Gastrocnemius medialis (tissue), 4 donors: ENCODE measurements at regions of chr9 and their contacts with region 1.

Region 1: DNA sequence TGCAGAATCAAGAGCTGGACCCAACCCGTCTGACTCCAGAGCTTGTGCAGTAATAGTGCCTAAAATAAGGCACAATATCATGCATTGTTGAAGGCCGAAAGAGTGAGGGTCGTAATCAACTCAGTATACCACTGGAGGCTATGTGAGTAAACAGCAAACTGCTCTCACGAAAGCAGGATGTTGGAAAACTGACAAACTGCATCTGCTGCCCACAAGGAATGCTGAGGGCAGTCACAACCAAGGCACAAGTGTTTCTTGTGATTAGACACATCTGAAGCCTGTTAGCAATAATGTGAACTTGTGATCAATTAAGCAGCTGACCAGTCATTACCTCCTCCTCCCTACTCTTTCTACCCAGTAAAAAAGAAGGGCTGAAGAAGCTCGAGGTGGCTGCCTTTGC is 48.8 kb downstream of the TRPM3 start:
- DNase-seq: no peak
- ATAC-seq: no peak
- H3K4me3 ChIP-seq: no peak overlapping the region
- H3K27ac ChIP-seq: no peak overlapping the region
- H3K4me1 ChIP-seq: no peaks in the 10 kb centered on the region
- H3K27me3 ChIP-seq: no peaks in the 10 kb centered on the region
- CTCF ChIP-seq: no peak
- POLR2A ChIP-seq: no peak

Region 2: GRCh38 chr9:70778568-70778967 is 294.0 kb before region 1 on chr9:
- in situ Hi-C with region 1: no loop called
- intact Hi-C with region 1: no loop called
- DNase-seq: no peak
- ATAC-seq: no peak
- H3K4me3 ChIP-seq: no peak overlapping the region
- H3K27ac ChIP-seq: no peak overlapping the region
- H3K4me1 ChIP-seq: no peaks in the 10 kb centered on the region
- H3K27me3 ChIP-seq: no peaks in the 10 kb centered on the region
- CTCF ChIP-seq: no peak
- POLR2A ChIP-seq: no peak

Region 3: GRCh38 chr9:71157731-71158130 is 85.1 kb after region 1 on chr9:
- in situ Hi-C with region 1: loop called in 1 of 4 experiments (anchors 25 kb)
- intact Hi-C with region 1: no loop called
- DNase-seq: no peak
- ATAC-seq: no peak
- H3K4me3 ChIP-seq: no peak overlapping the region
- H3K27ac ChIP-seq: no peak overlapping the region
- H3K4me1 ChIP-seq: no peaks in the 10 kb centered on the region
- H3K27me3 ChIP-seq: no peaks in the 10 kb centered on the region
- CTCF ChIP-seq: no peak
- POLR2A ChIP-seq: no peak